ENCODE measurements at regions of chr16 and their contacts with region 1.

Region 1: DNA sequence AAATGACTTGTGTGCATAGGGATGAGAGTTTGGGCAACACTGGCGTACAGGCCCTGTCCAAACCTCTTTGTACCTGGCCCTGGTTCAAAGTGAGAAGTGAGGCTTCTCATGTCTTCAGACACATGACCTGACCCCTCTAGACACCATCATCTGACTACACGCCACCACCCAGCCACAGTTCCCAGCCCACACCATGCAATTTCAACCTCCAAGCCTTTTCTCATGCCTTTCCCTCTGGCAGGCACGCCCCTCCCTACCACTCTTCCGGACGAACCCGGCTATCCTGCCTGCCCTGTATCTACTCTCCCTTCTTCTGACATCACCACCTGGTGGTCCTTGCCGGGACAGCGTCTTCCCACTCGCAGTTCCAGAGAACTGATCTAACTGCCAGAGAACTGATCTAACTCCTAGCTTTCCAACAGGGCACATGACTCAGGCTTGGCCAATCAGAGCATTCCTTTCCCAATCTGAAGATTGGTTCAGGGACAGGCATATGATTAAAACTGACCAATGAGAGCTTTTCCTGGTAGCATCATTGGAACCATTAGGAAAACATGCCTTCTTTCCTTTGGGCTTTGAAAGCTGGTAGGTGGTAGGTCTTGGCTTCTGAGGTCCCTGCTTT is 27.1 kb upstream of the IL21R start:
- DNase-seq: peak; percentile 61
- ATAC-seq: peak; percentile 47
- H3K4me3 Mint-ChIP-seq: no peak overlapping the region
- H3K27ac Mint-ChIP-seq: no peak overlapping the region
- H3K4me1 Mint-ChIP-seq: peaks cover 45% of the 10 kb centered on the region
- H3K27me3 Mint-ChIP-seq: no peaks in the 10 kb centered on the region

Region 2: DNA sequence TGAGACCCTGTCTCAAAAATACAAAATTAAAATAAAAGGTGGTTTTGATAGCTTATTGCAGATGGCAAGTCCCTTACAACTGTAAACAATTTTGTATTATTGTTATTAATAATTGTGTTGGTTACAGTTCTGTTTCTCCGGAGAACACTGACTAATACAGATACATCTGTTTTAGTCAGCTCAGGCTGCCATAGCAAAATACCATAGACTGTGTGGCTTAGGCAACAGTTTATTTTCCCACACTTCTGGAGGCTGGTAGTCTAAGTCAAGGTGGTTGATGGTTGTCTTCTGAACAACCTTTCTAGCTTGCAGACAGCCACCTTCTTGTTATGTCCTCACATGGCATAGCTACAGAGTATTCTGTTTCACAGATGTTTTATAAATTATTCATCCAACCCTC is 12.8 kb after region 1 on chr16:
- CTCF ChIA-PET with region 1: interaction called, 12 read pairs
- POLR2A ChIA-PET with region 1: interaction called, 3 read pairs
- DNase-seq: no peak
- ATAC-seq: no peak
- H3K4me3 Mint-ChIP-seq: no peak overlapping the region
- H3K27ac Mint-ChIP-seq: no peak overlapping the region
- H3K4me1 Mint-ChIP-seq: peaks cover 12% of the 10 kb centered on the region
- H3K27me3 Mint-ChIP-seq: no peaks in the 10 kb centered on the region

Region 3: GRCh38 chr16:27470567-27471431 is 95.9 kb after region 1 on chr16:
- CTCF ChIA-PET with region 1: no interaction called
- POLR2A ChIA-PET with region 1: no interaction called
- DNase-seq: no peak
- ATAC-seq: no peak
- H3K4me3 Mint-ChIP-seq: no peak overlapping the region
- H3K27ac Mint-ChIP-seq: no peak overlapping the region
- H3K4me1 Mint-ChIP-seq: peaks cover 2% of the 10 kb centered on the region
- H3K27me3 Mint-ChIP-seq: no peaks in the 10 kb centered on the region